WTC11 (cell line): ENCODE measurements at regions of chr15 and their contacts with region 1.

Region 1: GRCh38 chr15:69394556-69395282 is 19.4 kb upstream of the KIF23 start:
- DNase-seq: peak; percentile 97
- ATAC-seq: peak; percentile 96
- H3K4me3 Mint-ChIP-seq: peak overlapping the region; percentile 33; the same call in 1 of the 2 replicates
- H3K27ac Mint-ChIP-seq: no peak overlapping the region
- H3K4me1 Mint-ChIP-seq: peaks cover 20% of the 10 kb centered on the region
- H3K27me3 Mint-ChIP-seq: no peaks in the 10 kb centered on the region
- CTCF ChIP-seq: peak; percentile 93

Region 2: DNA sequence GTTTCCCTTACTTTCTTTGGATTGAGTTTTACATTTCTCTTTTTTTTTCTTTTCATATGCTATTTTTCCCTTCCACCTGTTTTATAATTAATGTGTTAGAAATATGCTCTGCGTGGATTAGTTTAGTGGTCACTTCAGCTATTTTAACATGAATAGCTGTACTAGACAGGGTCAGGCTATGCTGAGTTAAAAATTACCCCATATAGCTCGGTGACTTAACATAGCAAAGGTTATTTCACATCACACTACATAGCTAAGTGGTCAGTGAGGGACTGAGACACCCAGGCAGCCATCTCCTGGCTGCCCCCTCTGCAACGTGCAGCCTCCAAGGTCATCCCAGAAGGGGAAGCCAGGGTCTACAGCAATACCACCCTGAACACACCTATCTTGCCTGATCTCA is 27.5 kb before region 1 on chr15:
- CTCF ChIA-PET with region 1: no interaction called
- POLR2A ChIA-PET with region 1: no interaction called
- DNase-seq: no peak
- ATAC-seq: no peak
- H3K4me3 Mint-ChIP-seq: no peak overlapping the region
- H3K27ac Mint-ChIP-seq: no peak overlapping the region
- H3K4me1 Mint-ChIP-seq: no peaks in the 10 kb centered on the region
- H3K27me3 Mint-ChIP-seq: no peaks in the 10 kb centered on the region
- CTCF ChIP-seq: no peak

Region 3: GRCh38 chr15:69380100-69380727 is 14.5 kb before region 1 on chr15:
- CTCF ChIA-PET with region 1: interaction called, 23 read pairs
- POLR2A ChIA-PET with region 1: no interaction called
- DNase-seq: peak; percentile 65
- ATAC-seq: peak; percentile 98
- H3K4me3 Mint-ChIP-seq: no peak overlapping the region
- H3K27ac Mint-ChIP-seq: peak overlapping the region; percentile 25; the same call in 1 of the 2 replicates
- H3K4me1 Mint-ChIP-seq: peaks cover 16% of the 10 kb centered on the region
- H3K27me3 Mint-ChIP-seq: no peaks in the 10 kb centered on the region
- CTCF ChIP-seq: no peak

Region 4: GRCh38 chr15:69407753-69408385 is 13.2 kb after region 1 on chr15:
- CTCF ChIA-PET with region 1: interaction called, 10 read pairs
- POLR2A ChIA-PET with region 1: no interaction called
- DNase-seq: no peak
- ATAC-seq: no peak
- H3K4me3 Mint-ChIP-seq: no peak overlapping the region
- H3K27ac Mint-ChIP-seq: no peak overlapping the region
- H3K4me1 Mint-ChIP-seq: no peaks in the 10 kb centered on the region
- H3K27me3 Mint-ChIP-seq: no peaks in the 10 kb centered on the region; the same call in 1 of the 2 replicates
- CTCF ChIP-seq: no peak

Region 5: DNA sequence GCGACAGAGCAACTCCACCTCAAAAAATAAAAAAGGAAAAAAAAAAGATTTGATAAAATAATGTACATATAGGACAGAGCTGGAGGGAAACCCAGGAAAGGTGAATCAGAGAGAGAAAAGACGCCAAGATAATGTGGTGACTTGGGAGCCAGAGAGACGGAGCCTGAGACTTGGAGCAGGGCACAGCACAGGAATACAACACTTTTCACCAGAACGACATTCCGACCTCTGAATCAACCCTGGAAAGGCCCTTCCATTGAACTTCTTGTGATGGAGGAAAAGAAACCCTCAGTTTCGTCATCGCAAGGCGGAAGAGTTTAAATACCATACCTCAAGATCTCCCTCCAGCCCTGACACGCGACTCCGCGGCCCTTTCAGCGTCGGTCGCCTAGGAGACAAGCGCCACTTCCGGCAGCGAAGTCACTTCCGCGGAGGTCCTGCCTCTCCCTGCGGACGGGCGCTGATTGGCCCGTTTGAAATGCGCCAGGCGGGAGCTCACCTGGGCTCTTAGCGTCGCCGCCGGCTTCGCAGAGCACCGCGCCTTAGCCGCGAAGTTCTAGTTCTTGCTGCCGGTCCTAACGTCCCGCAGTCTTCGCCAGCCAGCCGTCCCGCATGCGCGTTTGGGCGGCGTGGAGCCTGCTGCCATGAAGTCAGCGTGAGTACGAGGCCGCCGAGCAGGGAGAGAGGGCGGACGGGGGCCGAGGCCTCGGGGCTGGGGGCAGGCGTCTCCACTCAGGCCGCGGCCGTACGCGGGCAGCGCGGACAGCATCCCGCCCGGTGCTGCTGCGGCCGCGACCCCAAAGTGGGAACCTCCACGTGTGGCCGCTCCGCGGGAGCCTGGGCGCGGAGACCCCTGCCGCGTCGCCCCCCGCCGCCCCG is 19.3 kb after region 1 on chr15 and contains the start of gene KIF23:
- CTCF ChIA-PET with region 1: interaction called, 11 read pairs
- POLR2A ChIA-PET with region 1: no interaction called
- DNase-seq: peak; percentile 93
- ATAC-seq: peak; percentile 94
- H3K4me3 Mint-ChIP-seq: peak within 1 kb of the TSS; percentile 91
- H3K27ac Mint-ChIP-seq: peak within 1 kb of the TSS; percentile 80
- H3K4me1 Mint-ChIP-seq: peaks cover 17% of the 10 kb centered on the region
- H3K27me3 Mint-ChIP-seq: no peaks in the 10 kb centered on the region; the same call in 1 of the 2 replicates
- CTCF ChIP-seq: no peak
- total RNA-seq, gene KIF23: 59.6 to 87.8 TPM (median 62.0 TPM) in 3 replicates

Region 6: GRCh38 chr15:69462493-69463181 is 67.9 kb after region 1 on chr15:
- CTCF ChIA-PET with region 1: interaction called, 10 read pairs
- POLR2A ChIA-PET with region 1: no interaction called
- DNase-seq: peak; percentile 98
- ATAC-seq: peak; percentile 90
- H3K4me3 Mint-ChIP-seq: peak overlapping the region; percentile 75
- H3K27ac Mint-ChIP-seq: peak overlapping the region; percentile 96
- H3K4me1 Mint-ChIP-seq: peaks cover 16% of the 10 kb centered on the region
- H3K27me3 Mint-ChIP-seq: no peaks in the 10 kb centered on the region
- CTCF ChIP-seq: peak; percentile 69